ENCODE measurements at regions of chr1 and their contacts with region 1.

Region 1: GRCh38 chr1:152110860-152111514 is 4.3 kb downstream of the TCHH start:
- DNase-seq: peak in 7 of 35 experiments; percentile 7 to 42 (median 15)
- ATAC-seq: peak; percentile 44 to 71 (median 68)
- H3K4me3 ChIP-seq: peak overlapping the region; percentile 52 to 74
- H3K4me3 Mint-ChIP-seq: no peak overlapping the region
- H3K27ac ChIP-seq: no peak overlapping the region
- H3K27ac Mint-ChIP-seq: no peak overlapping the region
- H3K4me1 ChIP-seq: peaks cover 0 to 53% of the 10 kb centered on the region in 2 experiments
- H3K4me1 Mint-ChIP-seq: no peaks in the 10 kb centered on the region
- H3K27me3 ChIP-seq: peaks cover 32 to 59% of the 10 kb centered on the region in 2 experiments
- H3K27me3 Mint-ChIP-seq: peaks cover 9 to 14% of the 10 kb centered on the region in 2 donors

Region 2: GRCh38 chr1:151980287-151981177 is 130.5 kb before region 1 on chr1:
- CTCF ChIA-PET with region 1: no interaction called
- POLR2A ChIA-PET with region 1: no interaction called
- DNase-seq: no peak
- ATAC-seq: no peak
- H3K4me3 ChIP-seq: no peak overlapping the region
- H3K4me3 Mint-ChIP-seq: no peak overlapping the region
- H3K27ac ChIP-seq: no peak overlapping the region
- H3K27ac Mint-ChIP-seq: no peak overlapping the region
- H3K4me1 ChIP-seq: peaks cover 0 to 13% of the 10 kb centered on the region in 2 experiments
- H3K4me1 Mint-ChIP-seq: peaks cover 25 to 30% (median 26%) of the 10 kb centered on the region in 3 donors
- H3K27me3 ChIP-seq: peaks cover 0 to 3% of the 10 kb centered on the region in 2 experiments
- H3K27me3 Mint-ChIP-seq: no peaks in the 10 kb centered on the region

Region 3: GRCh38 chr1:152009693-152010092 is 101.3 kb before region 1 on chr1:
- CTCF ChIA-PET with region 1: no interaction called
- POLR2A ChIA-PET with region 1: interaction called in 1 of 2 experiments, 22 read pairs
- DNase-seq: no peak
- ATAC-seq: no peak
- H3K4me3 ChIP-seq: no peak overlapping the region
- H3K4me3 Mint-ChIP-seq: no peak overlapping the region
- H3K27ac ChIP-seq: no peak overlapping the region
- H3K27ac Mint-ChIP-seq: no peak overlapping the region
- H3K4me1 ChIP-seq: no peaks in the 10 kb centered on the region
- H3K4me1 Mint-ChIP-seq: peaks cover 3 to 5% (median 4%) of the 10 kb centered on the region in 3 donors
- H3K27me3 ChIP-seq: peaks cover 0 to 14% of the 10 kb centered on the region in 2 experiments
- H3K27me3 Mint-ChIP-seq: peaks cover 4 to 17% of the 10 kb centered on the region in 2 donors

Region 4: DNA sequence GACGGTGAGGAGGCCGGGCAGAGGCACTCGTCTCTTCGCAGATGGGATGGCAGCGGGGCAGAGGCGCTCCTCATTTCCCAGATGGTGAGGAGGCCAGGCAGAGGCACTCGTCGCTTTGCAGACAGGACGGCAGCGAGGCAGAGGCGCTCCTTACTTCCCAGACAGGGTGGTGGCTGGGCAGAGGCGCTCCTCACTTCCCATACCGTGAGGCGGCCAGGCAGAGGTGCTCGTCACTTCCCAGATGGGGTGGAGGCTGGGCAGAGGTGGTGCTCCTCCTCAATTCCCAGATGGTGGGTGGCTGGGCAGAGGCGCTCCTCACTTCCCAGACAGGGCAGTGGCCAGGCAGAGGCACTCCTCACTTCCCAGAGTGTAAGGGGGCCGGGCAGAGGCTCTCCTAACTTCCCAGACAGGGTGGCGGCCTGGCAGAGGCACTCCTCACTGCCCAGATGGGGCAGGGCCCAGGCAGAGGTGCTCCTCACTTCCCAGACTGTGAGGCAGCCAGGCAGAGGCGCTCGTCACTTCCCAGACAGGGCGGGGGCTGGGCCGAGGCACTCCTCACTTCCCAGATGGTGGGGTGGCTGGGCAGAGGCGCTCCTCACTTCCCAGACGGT is 32.1 kb before region 1 on chr1:
- CTCF ChIA-PET with region 1: no interaction called
- POLR2A ChIA-PET with region 1: interaction called in 1 of 2 experiments, 11 read pairs
- DNase-seq: no peak
- ATAC-seq: no peak
- H3K4me3 ChIP-seq: no peak overlapping the region
- H3K4me3 Mint-ChIP-seq: no peak overlapping the region
- H3K27ac ChIP-seq: no peak overlapping the region
- H3K27ac Mint-ChIP-seq: no peak overlapping the region
- H3K4me1 ChIP-seq: no peaks in the 10 kb centered on the region
- H3K4me1 Mint-ChIP-seq: no peaks in the 10 kb centered on the region
- H3K27me3 ChIP-seq: peaks cover 0 to 16% of the 10 kb centered on the region in 2 experiments
- H3K27me3 Mint-ChIP-seq: peaks cover 25 to 29% of the 10 kb centered on the region in 2 donors

Measured in T-cell (primary cell).